Uterus (tissue), 4 donors: ENCODE measurements at regions of chr20 and their contacts with region 1.

Region 1: GRCh38 chr20:17617551-17618223 is 47.8 kb downstream of the DSTN start:
- DNase-seq: peak; percentile 72 to 76
- H3K4me3 ChIP-seq: no peak overlapping the region
- H3K27ac ChIP-seq: peak overlapping the region in 1 of 2 donors; percentile 14
- H3K4me1 ChIP-seq: peaks cover 0 to 9% of the 10 kb centered on the region in 2 donors
- H3K27me3 ChIP-seq: no peaks in the 10 kb centered on the region
- CTCF ChIP-seq: peak; percentile 76 to 90 (median 83)
- POLR2A ChIP-seq: no peak

Region 2: DNA sequence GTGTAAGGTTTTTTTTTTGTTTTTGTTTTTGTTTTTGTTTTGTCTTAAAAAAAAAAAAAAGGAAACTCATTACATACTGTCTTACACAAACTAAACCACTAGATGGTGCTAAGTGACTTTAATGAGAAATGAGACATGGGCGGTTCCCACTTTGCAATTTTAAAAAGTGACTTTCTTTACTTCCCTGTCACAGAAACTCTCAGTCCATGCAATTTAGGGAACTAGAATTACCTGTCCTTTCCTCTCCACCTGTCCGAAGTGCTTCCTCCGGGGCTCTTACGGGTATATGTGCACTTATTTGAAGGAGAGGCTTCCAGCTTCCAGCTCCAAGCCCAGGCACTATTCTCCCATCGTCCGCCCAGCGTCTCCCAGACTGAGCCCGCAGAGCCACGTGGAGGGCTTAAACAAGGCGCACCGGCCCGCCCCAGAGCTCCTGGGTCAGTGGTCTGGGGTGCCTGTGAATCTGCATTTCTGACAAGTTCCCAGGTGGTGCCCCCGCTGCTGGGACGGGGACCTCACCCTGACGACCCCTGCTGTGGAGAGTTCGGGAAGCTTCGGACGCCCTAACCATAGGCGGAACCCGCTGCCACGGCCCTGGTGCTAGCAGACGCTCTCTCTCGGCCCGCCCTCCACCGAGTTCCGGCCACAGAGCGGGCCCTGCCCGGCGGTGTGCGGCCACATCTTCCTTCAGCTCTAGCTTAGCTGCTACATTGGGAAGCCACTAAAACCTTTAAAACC is 112.6 kb before region 1 on chr20:
- intact Hi-C with region 1: loop called (anchors 5 kb)
- DNase-seq: peak; percentile 40 to 53
- H3K4me3 ChIP-seq: peak overlapping the region; percentile 41 to 49
- H3K27ac ChIP-seq: peak overlapping the region; percentile 44 to 47
- H3K4me1 ChIP-seq: no peaks in the 10 kb centered on the region
- H3K27me3 ChIP-seq: no peaks in the 10 kb centered on the region
- CTCF ChIP-seq: peak; percentile 67 to 84 (median 76)
- POLR2A ChIP-seq: no peak

Region 3: DNA sequence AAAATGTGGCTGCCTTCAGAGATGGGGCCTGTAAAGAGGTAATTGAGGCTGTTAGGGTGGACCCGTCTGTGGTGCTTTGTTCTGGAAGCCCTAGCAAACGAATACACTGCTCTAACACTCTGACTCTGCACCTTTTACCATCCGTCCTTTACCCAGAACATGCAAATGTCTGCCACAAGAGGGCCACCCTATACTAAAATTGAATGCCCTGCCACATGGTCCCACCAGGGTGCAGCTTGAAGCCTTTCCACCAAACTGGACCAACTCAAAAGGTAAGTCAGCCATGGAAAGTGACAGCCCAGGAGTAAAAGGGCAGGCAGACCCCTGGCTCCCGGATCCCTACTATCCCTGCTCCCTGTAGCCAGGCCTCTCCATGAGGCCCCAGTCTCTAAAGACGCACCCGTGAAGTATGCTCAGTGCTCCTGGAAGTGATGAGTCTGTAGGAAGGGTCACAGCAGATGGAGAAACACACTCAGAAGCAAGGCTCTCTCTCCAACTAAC is 80.7 kb before region 1 on chr20:
- intact Hi-C with region 1: loop called (anchors 1 kb)
- DNase-seq: peak; percentile 73 to 82
- H3K4me3 ChIP-seq: no peak overlapping the region
- H3K27ac ChIP-seq: no peak overlapping the region
- H3K4me1 ChIP-seq: peaks cover 0 to 3% of the 10 kb centered on the region in 2 donors
- H3K27me3 ChIP-seq: no peaks in the 10 kb centered on the region
- CTCF ChIP-seq: peak; percentile 85 to 98 (median 96)
- POLR2A ChIP-seq: no peak

Region 4: GRCh38 chr20:17859616-17860232 is 242.0 kb after region 1 on chr20:
- intact Hi-C with region 1: no loop called
- DNase-seq: no peak
- H3K4me3 ChIP-seq: no peak overlapping the region
- H3K27ac ChIP-seq: no peak overlapping the region
- H3K4me1 ChIP-seq: no peaks in the 10 kb centered on the region
- H3K27me3 ChIP-seq: no peaks in the 10 kb centered on the region
- CTCF ChIP-seq: no peak
- POLR2A ChIP-seq: no peak